BJ (cell line): ENCODE measurements at regions of chr17 and their contacts with region 1.

Region 1: DNA sequence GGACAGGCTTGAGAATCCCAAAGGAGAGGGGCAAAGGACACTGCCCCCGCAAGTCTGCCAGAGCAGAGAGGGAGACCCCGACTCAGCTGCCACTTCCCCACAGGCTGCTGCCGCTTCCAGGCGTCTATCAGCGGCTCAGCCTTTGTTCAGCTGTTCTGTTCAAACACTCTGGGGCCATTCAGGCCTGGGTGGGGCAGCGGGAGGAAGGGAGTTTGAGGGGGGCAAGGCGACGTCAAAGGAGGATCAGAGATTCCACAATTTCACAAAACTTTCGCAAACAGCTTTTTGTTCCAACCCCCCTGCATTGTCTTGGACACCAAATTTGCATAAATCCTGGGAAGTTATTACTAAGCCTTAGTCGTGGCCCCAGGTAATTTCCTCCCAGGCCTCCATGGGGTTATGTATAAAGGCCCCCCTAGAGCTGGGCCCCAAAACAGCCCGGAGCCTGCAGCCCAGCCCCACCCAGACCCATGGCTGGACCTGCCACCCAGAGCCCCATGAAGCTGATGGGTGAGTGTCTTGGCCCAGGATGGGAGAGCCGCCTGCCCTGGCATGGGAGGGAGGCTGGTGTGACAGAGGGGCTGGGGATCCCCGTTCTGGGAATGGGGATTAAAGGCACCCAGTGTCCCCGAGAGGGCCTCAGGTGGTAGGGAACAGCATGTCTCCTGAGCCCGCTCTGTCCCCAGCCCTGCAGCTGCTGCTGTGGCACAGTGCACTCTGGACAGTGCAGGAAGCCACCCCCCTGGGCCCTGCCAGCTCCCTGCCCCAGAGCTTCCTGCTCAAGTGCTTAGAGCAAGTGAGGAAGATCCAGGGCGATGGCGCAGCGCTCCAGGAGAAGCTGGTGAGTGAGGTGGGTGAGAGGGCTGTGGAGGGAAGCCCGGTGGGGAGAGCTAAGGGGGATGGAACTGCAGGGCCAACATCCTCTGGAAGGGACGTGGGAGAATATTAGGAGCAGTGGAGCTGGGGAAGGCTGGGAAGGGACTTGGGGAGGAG is at the start of gene CSF3:
- DNase-seq: no peak
- H3K4me3 ChIP-seq: no peak within 1 kb of the TSS
- H3K27me3 ChIP-seq: no peaks in the 10 kb centered on the region
- CTCF ChIP-seq: no peak
- polyA plus RNA-seq, gene CSF3: not detected in 2 replicates

Region 2: DNA sequence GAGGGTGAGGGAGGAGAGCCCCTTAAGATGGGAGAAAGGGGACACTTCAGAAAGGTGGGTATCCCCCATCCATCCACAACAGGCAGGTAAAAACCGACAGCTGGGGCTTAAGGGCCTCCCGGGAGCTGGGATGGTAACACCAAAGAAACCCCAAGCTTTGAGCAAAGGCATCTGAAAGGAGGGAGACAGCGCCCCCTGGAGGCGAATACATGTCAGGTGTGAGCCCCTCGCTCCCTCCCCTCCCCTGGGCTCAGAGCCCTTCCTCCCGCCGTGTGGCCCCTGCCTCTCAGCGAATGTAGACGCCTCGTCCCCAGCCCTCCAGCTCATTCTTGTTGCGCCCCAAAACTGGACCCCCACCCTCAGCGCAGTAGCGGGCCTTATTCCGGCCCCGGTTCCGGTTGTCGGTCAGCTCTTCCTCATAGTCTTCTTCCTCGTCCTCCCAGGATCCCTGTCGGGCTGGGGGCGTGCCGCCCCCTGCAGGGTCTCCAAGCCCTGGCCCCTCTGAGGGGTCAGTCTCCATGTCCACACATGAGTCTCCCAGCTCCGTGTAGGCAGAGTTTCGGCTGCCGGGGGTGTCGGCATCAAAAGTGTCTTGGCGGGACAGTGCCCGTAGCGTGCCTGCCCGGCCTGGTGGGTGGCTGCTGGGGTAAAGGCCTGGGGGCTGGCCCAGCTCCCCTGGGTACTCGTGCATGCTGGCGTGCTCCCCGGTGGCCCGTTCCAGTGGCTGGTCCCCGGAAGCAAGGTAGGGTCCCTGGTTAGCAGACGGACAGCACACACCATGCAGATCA is 840.2 kb before region 1 on chr17:
- CTCF ChIA-PET with region 1: no interaction called
- POLR2A ChIA-PET with region 1: no interaction called
- DNase-seq: no peak
- H3K4me3 ChIP-seq: no peak overlapping the region
- H3K27me3 ChIP-seq: no peaks in the 10 kb centered on the region
- CTCF ChIP-seq: peak; percentile 87

Region 3: GRCh38 chr17:39668199-39668966 is 346.9 kb before region 1 on chr17 and contains the start of gene PNMT:
- CTCF ChIA-PET with region 1: no interaction called
- POLR2A ChIA-PET with region 1: no interaction called
- DNase-seq: no peak
- H3K4me3 ChIP-seq: no peak within 1 kb of the TSS
- H3K27me3 ChIP-seq: peaks cover 19% of the 10 kb centered on the region
- CTCF ChIP-seq: peak; percentile 66
- polyA plus RNA-seq, gene PNMT: not detected in 2 replicates

Region 4: GRCh38 chr17:40026816-40027613 is 11.7 kb after region 1 on chr17:
- CTCF ChIA-PET with region 1: interaction called, 133 read pairs
- POLR2A ChIA-PET with region 1: no interaction called
- DNase-seq: no peak
- H3K4me3 ChIP-seq: no peak overlapping the region
- H3K27me3 ChIP-seq: no peaks in the 10 kb centered on the region
- CTCF ChIP-seq: peak; percentile 89

Region 5: DNA sequence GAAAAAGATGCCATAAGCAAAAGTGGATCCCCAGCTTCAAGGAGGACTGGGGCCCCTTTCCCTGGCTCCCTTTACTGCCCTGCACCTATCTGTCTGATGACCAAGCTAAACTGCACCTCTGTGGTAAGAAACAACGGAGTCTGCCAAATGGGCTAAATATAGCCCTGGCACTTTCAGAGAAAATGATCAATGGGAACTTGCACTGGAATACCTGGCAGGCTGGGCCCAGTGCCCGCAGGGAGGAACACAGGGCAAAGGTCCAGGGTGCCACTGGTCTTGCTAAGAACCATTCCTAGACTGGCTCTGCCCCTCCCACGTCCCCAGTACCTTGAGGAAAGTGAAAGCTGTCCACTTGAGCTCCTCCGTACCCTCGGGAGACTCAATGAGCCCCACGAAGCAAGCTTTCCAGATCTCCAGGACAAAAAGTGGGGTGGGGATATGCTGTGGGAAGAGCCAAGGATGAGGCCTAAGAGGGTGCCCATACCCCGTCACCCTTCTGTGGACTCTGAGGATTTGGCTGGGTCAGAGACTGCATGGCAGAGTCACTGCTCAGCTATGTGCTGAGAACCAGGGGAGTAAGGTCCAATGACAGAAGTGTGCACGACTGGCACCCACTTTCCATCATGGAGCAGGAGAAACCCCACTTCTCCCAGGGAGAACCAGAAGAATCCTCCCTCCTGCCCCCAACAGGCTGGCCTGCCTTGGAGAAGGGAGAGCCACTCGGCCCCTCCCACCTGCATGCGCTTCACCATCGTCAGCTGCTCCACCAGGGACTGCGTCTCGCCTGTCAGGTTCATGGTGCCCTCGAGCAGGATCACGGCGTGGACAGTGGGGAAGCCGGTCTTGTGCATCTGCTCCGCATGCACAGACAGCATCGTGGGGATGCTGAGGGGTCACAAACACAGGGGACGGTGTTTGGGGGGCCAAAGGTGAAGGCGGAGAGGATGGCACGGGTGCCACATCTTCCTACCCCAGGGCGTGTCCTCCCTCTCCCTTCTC is 17.3 kb after region 1 on chr17:
- CTCF ChIA-PET with region 1: interaction called, 133 read pairs
- POLR2A ChIA-PET with region 1: no interaction called
- DNase-seq: no peak
- H3K4me3 ChIP-seq: no peak overlapping the region
- H3K27me3 ChIP-seq: no peaks in the 10 kb centered on the region
- CTCF ChIP-seq: no peak

Region 6: GRCh38 chr17:40058186-40058784 is 43.0 kb after region 1 on chr17:
- CTCF ChIA-PET with region 1: no interaction called
- POLR2A ChIA-PET with region 1: no interaction called
- DNase-seq: no peak
- H3K4me3 ChIP-seq: no peak overlapping the region
- H3K27me3 ChIP-seq: no peaks in the 10 kb centered on the region
- CTCF ChIP-seq: no peak

Region 7: DNA sequence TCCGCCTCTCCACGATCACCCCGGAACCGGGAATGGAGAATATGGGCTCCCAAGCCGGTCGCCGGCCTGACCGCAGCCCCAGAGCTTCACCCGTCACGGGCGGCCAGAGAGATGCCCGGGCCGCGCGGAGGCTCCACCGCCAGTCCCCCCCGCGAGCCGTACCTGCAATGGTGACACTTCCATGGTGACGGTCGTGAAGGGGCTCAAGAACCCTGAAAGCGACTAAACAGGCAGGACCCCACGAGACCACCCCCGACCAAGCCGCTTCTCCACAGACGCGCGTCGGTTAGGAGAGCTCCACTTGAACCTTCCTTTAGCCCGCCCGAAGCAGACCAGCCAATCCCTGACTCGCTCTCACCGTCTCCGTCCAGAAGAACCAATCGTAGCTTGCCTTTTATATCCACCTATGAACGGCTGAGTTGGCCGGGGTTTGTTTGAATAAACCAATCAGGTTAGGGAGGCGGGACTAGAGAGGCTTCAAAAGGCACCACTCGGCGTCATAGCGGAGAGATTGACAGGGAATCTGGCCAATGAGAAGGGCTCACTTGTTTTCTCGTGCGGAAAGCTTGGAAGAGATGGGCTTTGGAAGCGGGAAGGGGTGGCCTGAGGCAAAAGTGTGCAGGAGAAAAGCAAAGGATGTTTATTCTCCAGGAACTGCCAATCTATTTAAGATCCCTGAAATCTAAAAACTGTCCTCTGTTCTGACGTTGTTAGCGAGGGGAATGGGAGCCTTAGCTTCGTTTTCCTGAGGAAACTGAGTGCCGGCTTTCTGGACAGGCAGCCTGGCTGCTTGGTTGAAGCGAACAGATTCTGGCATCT is 402.5 kb after region 1 on chr17 and contains the start of gene TOP2A:
- CTCF ChIA-PET with region 1: no interaction called
- POLR2A ChIA-PET with region 1: no interaction called
- DNase-seq: peak; percentile 99
- H3K4me3 ChIP-seq: peak within 1 kb of the TSS; percentile 56
- H3K27me3 ChIP-seq: no peaks in the 10 kb centered on the region
- CTCF ChIP-seq: no peak
- polyA plus RNA-seq, gene TOP2A: 31.8 and 69.6 TPM in 2 replicates